OCI-LY7 (cell line): ENCODE measurements at regions of chr3 and their contacts with region 1.

Region 1: DNA sequence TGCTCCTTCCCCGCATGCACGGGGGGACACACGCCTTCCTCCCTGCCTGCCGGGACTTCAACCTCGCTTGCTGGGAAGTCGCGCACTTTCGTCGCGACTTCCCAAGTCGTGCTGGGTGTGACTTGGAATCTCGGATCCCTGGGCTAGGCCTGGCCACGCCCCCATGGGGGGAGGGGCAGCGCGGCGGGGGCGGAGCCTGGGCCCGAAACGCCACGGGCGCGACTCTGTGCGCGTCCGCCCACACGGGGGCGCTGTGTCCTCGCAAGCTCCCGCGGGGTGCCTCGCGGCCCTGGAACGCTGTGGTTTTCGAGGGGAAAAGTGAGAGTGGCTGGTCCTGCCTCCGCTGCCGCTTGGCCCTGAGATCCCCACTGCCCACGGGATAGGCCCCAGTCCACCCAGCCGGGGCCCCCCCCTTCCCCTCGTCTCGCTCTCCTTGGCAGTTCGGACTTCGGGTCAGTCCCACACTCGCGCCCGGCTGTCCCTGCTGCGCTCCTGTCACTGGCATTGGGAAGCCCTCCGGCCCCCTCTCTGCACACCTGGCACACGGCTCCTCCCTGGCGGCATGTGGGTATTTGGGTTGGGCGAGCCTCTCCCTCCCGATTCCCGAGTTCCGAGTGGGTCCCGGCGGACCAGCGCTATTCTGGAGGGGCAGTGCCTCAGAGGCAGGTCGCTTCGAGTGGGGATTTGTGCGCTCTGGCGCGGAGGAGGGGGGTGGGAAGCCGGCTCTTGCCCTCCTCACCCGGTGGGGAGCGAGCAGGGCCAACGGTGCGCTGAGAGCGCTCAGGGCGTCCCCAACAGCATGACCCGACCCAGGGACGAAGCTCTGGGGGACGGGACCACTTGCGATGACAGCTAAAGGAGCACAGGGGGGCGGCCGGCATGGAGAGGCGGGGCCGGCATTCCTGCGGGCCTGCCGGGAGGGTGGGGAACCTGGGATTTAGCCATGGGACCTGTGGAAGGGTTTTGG is 23.6 kb downstream of the SEC61A1 start:
- DNase-seq: peak; percentile 77
- H3K4me3 ChIP-seq: no peak overlapping the region
- H3K27ac ChIP-seq: no peak overlapping the region
- H3K4me1 ChIP-seq: no peaks in the 10 kb centered on the region
- CTCF ChIP-seq: peak; percentile 90

Region 2: DNA sequence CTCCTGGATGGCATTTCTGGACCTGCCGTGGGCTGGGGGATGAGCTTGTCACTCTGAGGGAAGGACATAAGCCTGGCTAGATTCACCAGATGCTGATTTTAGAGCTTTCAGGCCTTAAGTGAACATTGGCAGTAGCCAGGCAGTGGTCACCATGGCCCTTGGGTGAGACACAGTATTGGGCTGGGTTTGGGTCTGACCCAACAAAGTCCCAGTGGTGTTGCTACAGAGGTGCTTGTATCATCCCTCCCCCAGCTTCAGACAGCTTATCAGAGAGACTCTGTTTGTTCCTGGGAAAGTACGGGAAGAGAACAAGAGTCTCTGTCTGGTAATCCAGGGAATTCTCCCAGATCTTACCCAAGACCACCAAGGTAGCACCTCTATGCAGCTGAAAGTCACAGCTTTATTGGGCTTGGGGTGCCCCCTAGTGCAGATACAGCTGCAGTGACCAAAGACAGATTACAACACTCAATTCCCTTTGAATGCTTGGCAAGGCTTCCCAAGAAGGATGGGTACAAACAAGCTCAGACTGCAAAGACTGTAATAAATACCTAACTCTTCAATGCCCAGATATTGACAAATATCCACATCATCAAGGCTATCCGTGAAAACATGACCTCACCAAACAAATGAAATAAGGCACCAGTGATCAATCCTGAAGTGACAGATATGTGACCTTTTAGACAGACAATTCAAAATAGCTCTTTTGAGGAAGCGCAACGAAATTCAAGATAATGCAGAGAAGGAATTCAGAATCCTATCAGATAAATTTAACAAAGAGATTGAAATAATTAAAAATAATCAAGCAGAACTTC is 57.7 kb after region 1 on chr3:
- CTCF ChIA-PET with region 1: no interaction called
- POLR2A ChIA-PET with region 1: interaction called, 4 read pairs
- intact Hi-C with region 1: loop called (anchors 2 kb)
- DNase-seq: peak; percentile 57
- H3K4me3 ChIP-seq: no peak overlapping the region
- H3K27ac ChIP-seq: no peak overlapping the region
- H3K4me1 ChIP-seq: no peaks in the 10 kb centered on the region
- CTCF ChIP-seq: peak; percentile 93

Region 3: DNA sequence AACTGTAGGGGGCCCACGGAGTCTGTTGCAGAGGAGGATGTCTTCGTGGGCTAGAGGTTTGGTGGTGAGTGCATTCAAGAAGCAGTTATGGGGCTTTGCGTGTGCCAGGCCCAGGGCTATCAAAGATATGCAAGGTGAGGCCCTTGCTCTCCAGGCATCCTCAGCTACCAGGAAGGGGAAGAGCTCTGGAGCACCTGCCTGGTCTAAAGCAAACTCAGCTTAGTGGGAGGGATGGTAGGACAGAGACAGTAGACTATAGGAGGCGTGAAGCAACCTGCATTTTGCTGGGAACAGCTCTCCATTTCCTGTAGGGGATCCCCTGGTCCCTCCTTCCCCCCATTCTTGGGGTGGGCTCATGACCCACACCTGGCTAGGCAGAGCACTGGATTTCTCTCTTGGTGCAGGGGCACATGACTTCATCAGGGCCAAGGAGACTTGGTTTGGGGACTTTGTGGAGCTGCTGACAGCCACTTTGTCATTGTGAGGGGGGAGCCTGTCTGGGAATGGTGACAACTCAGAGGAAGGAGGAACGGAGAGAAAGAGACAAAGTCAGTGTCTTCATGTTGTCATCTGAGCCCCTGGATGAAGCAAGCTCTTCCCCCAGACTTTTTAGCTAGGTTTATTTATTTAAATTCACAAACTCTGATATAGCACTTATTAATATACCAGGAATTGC is 68.9 kb after region 1 on chr3:
- CTCF ChIA-PET with region 1: no interaction called
- POLR2A ChIA-PET with region 1: no interaction called
- intact Hi-C with region 1: loop called (anchors 1 kb)
- DNase-seq: no peak
- H3K4me3 ChIP-seq: no peak overlapping the region
- H3K27ac ChIP-seq: no peak overlapping the region
- H3K4me1 ChIP-seq: no peaks in the 10 kb centered on the region
- CTCF ChIP-seq: no peak

Region 4: GRCh38 chr3:128297401-128298138 is 221.8 kb after region 1 on chr3:
- CTCF ChIA-PET with region 1: no interaction called
- POLR2A ChIA-PET with region 1: no interaction called
- intact Hi-C with region 1: no loop called
- DNase-seq: no peak
- H3K4me3 ChIP-seq: no peak overlapping the region
- H3K27ac ChIP-seq: no peak overlapping the region
- H3K4me1 ChIP-seq: peaks cover 17% of the 10 kb centered on the region
- CTCF ChIP-seq: no peak